Transverse colon (tissue), 4 donors: ENCODE measurements at regions of chr5 and their contacts with region 1.

Region 1: GRCh38 chr5:60710373-60710772 is 10.4 kb upstream of the DEPDC1B start:
- DNase-seq: no peak
- H3K4me3 ChIP-seq: no peak overlapping the region
- H3K27ac ChIP-seq: no peak overlapping the region
- H3K4me1 ChIP-seq: no peaks in the 10 kb centered on the region
- H3K27me3 ChIP-seq: no peaks in the 10 kb centered on the region
- CTCF ChIP-seq: no peak
- EP300 ChIP-seq: no peak
- POLR2A ChIP-seq: no peak

Region 2: GRCh38 chr5:59620535-59621212 is 1089.7 kb before region 1 on chr5:
- in situ Hi-C with region 1: no loop called
- intact Hi-C with region 1: loop called (anchors 5 kb)
- DNase-seq: no peak
- H3K4me3 ChIP-seq: no peak overlapping the region
- H3K27ac ChIP-seq: no peak overlapping the region
- H3K4me1 ChIP-seq: peaks cover 0 to 7% (median 2%) of the 10 kb centered on the region in 4 donors
- H3K27me3 ChIP-seq: no peaks in the 10 kb centered on the region
- CTCF ChIP-seq: no peak
- EP300 ChIP-seq: no peak
- POLR2A ChIP-seq: no peak